ENCODE measurements at regions of chr17 and their contacts with region 1.

Region 1: GRCh38 chr17:45293413-45294211 is 23.2 kb downstream of the MAP3K14 start:
- DNase-seq: peak; percentile 94
- H3K4me3 ChIP-seq: no peak overlapping the region
- H3K27ac ChIP-seq: peak overlapping the region; percentile 50
- H3K4me1 ChIP-seq: peaks cover 45% of the 10 kb centered on the region
- H3K27me3 ChIP-seq: no peaks in the 10 kb centered on the region
- CTCF ChIP-seq: peak; percentile 5 to 30
- POLR2A ChIP-seq: peak; percentile 41

Region 2: DNA sequence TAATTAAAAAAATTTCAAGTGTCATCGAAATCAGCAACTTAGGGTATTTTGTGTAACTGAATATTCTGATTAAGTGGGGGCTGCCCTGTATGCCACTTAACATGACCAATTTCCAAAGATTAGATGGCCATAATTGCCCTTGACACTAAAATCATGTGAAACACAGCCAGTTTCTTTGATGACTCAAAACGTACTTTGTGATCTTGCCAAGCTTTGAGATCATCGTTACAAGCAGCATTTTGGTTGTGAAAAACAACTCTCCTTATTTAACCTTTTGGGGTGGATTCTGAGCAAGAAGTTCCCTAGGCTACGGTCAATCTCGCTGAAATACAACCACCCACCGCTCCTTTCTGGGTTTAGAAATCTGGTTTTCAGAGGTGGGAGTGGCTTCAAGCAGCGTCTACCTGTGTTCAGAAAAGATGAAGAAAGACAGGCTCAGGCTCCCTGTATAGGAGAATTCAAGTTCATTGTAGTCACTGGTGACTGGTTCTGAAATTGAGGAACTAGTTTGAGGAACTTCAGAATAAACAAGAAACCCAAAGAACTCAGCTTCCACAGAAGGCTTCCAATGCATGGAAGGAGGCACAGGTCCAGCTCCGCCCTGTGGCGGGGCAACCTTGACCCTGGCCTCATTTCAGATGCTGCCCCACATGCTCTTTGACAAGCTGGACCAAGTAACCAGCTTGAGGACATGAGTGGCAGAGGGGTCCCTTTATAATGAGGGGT is 13.8 kb after region 1 on chr17:
- CTCF ChIA-PET with region 1: interaction called, 20 read pairs
- POLR2A ChIA-PET with region 1: no interaction called
- dilution Hi-C with region 1: no loop called
- intact Hi-C with region 1: no loop called
- DNase-seq: peak; percentile 88
- H3K4me3 ChIP-seq: no peak overlapping the region
- H3K27ac ChIP-seq: peak overlapping the region; percentile 62
- H3K4me1 ChIP-seq: peaks cover 10% of the 10 kb centered on the region
- H3K27me3 ChIP-seq: no peaks in the 10 kb centered on the region
- CTCF ChIP-seq: no peak
- POLR2A ChIP-seq: no peak

Region 3: GRCh38 chr17:45371414-45372327 is 78.1 kb after region 1 on chr17:
- CTCF ChIA-PET with region 1: interaction called, 7 read pairs
- POLR2A ChIA-PET with region 1: no interaction called
- dilution Hi-C with region 1: no loop called
- intact Hi-C with region 1: loop called (anchors 1 kb)
- DNase-seq: peak; percentile 93
- H3K4me3 ChIP-seq: peak overlapping the region in 2 of 3 experiments; percentile 12 to 18
- H3K27ac ChIP-seq: peak overlapping the region; percentile 97
- H3K4me1 ChIP-seq: peaks cover 20% of the 10 kb centered on the region
- H3K27me3 ChIP-seq: no peaks in the 10 kb centered on the region
- CTCF ChIP-seq: peak in 1 of 2 donors; percentile 3
- POLR2A ChIP-seq: peak; percentile 76

Region 4: DNA sequence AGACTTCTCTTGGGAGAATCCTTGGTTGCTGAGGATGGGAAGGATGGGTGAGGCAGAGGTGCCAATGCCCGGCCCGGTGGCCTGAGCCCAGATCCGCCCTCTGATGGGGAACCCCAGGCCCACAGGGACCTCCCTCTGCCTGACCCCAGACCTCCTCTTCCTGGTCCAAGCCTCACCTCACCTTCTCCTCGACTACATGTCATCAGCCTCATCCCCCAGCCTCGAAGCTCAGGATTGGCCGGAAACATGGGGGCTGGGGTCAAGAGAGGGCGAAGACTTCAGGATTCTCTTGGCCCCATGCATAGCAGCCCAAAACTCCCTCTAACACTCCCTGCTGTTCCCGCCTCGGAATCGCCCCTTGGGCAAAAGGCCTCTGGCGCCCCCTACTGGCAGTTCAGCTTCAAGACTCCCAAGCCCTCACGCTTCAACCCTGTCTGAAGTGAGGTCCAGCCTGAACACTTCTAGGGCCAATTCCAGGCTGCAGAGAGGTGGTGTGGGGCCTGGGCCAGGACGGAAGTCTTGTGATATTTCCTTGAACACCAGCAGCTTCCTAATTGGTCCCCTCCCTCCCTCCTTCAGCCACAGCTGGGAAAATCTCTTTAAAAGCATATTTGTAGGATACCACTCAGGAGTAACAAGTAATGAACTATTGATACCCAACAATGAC is 91.9 kb after region 1 on chr17:
- CTCF ChIA-PET with region 1: interaction called, 21 read pairs
- POLR2A ChIA-PET with region 1: no interaction called
- dilution Hi-C with region 1: no loop called
- intact Hi-C with region 1: no loop called
- DNase-seq: peak; percentile 77
- H3K4me3 ChIP-seq: no peak overlapping the region
- H3K27ac ChIP-seq: no peak overlapping the region
- H3K4me1 ChIP-seq: no peaks in the 10 kb centered on the region
- H3K27me3 ChIP-seq: peaks cover 0 to 6% of the 10 kb centered on the region in 2 experiments
- CTCF ChIP-seq: peak; percentile 94 to 97
- POLR2A ChIP-seq: no peak

Measured in endothelial cell of umbilical vein (primary cell).